CD4-positive, alpha-beta memory T cell (primary cell): ENCODE measurements at regions of chr16 and their contacts with region 1.

Region 1: GRCh38 chr16:57591086-57591869 is 37.2 kb upstream of the ADGRG1 start:
- DNase-seq: peak; percentile 49 to 60 (median 59)
- H3K4me3 ChIP-seq: no peak overlapping the region
- H3K4me3 Mint-ChIP-seq: peak overlapping the region in 6 of 8 donors; percentile 23 to 89 (median 56)
- H3K27ac ChIP-seq: no peak overlapping the region
- H3K27ac Mint-ChIP-seq: peak overlapping the region; percentile 8 to 91 (median 68)
- H3K4me1 ChIP-seq: peaks cover 35% of the 10 kb centered on the region
- H3K4me1 Mint-ChIP-seq: peaks cover 28 to 49% (median 35%) of the 10 kb centered on the region in 4 donors
- H3K27me3 ChIP-seq: no peaks in the 10 kb centered on the region
- H3K27me3 Mint-ChIP-seq: no peaks in the 10 kb centered on the region

Region 2: DNA sequence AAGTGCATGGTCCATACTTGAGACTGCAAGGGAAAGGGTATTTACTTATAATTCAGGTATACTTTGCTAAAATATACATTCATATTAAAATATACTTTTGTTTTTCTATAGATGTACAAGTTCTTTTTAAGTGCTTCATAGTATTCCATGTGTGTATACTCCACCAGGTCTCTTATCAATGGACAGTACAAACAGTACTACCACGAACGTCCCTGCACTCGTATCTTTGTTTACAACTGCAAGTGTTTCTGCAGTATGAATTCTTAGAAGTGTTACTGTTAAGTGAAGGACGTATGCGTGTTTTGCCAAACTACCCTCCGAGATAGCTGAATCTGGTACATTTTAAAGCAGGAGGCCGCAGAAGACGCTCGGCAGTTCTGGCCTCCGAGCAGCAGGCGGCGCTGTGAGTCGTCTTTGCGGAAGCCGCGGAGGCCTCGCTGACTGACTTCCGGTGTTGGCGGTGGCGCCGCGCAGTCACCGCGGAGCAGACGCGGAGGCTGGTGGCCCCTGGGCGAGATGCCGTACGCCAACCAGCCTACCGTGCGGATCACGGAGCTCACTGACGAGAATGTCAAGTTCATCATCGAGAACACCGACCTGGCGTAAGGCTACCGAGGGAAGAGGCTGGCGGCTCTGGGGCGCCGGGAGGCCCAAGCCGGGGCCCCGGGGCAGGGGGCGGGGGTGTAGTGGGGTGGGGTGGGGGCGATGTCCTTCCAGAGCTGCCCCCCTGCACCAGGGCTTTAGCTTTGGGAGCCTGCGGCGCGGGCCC is 128.9 kb before region 1 on chr16 and contains the start of gene POLR2C:
- CTCF ChIA-PET with region 1: no interaction called
- POLR2A ChIA-PET with region 1: no interaction called
- intact Hi-C with region 1: no loop called
- DNase-seq: peak; percentile 89 to 93 (median 90)
- H3K4me3 ChIP-seq: peak within 1 kb of the TSS; percentile 81 to 87
- H3K4me3 Mint-ChIP-seq: peak within 1 kb of the TSS; percentile 98 to 100 (median 100)
- H3K27ac ChIP-seq: peak within 1 kb of the TSS; percentile 69
- H3K27ac Mint-ChIP-seq: peak within 1 kb of the TSS; percentile 96 to 100 (median 99)
- H3K4me1 ChIP-seq: peaks cover 36% of the 10 kb centered on the region
- H3K4me1 Mint-ChIP-seq: peaks cover 16 to 43% (median 34%) of the 10 kb centered on the region in 4 donors
- H3K27me3 ChIP-seq: no peaks in the 10 kb centered on the region
- H3K27me3 Mint-ChIP-seq: no peaks in the 10 kb centered on the region
- total RNA-seq, gene POLR2C: 71.4 to 78.1 TPM

Region 3: GRCh38 chr16:57513371-57514102 is 77.7 kb before region 1 on chr16:
- CTCF ChIA-PET with region 1: no interaction called
- POLR2A ChIA-PET with region 1: no interaction called
- intact Hi-C with region 1: no loop called
- DNase-seq: no peak
- H3K4me3 ChIP-seq: no peak overlapping the region
- H3K4me3 Mint-ChIP-seq: no peak overlapping the region
- H3K27ac ChIP-seq: no peak overlapping the region
- H3K27ac Mint-ChIP-seq: peak overlapping the region in 1 of 7 donors; percentile 57
- H3K4me1 ChIP-seq: no peaks in the 10 kb centered on the region
- H3K4me1 Mint-ChIP-seq: no peaks in the 10 kb centered on the region
- H3K27me3 ChIP-seq: no peaks in the 10 kb centered on the region
- H3K27me3 Mint-ChIP-seq: no peaks in the 10 kb centered on the region

Region 4: GRCh38 chr16:57530104-57530521 is 61.2 kb before region 1 on chr16:
- CTCF ChIA-PET with region 1: no interaction called
- POLR2A ChIA-PET with region 1: no interaction called
- intact Hi-C with region 1: no loop called
- DNase-seq: peak; percentile 59 to 90 (median 63)
- H3K4me3 ChIP-seq: peak overlapping the region in 1 of 2 donors; percentile 42
- H3K4me3 Mint-ChIP-seq: peak overlapping the region; percentile 67 to 89 (median 82)
- H3K27ac ChIP-seq: peak overlapping the region; percentile 60
- H3K27ac Mint-ChIP-seq: peak overlapping the region; percentile 92 to 97 (median 96)
- H3K4me1 ChIP-seq: peaks cover 59% of the 10 kb centered on the region
- H3K4me1 Mint-ChIP-seq: peaks cover 49 to 60% (median 54%) of the 10 kb centered on the region in 4 donors
- H3K27me3 ChIP-seq: no peaks in the 10 kb centered on the region
- H3K27me3 Mint-ChIP-seq: no peaks in the 10 kb centered on the region

Region 5: GRCh38 chr16:57609541-57610401 is 18.5 kb after region 1 on chr16:
- CTCF ChIA-PET with region 1: interaction called, 58 read pairs
- POLR2A ChIA-PET with region 1: interaction called, 21 read pairs
- intact Hi-C with region 1: loop called (anchors 2 kb)
- DNase-seq: peak; percentile 60 to 67 (median 60)
- H3K4me3 ChIP-seq: peak overlapping the region; percentile 12 to 30
- H3K4me3 Mint-ChIP-seq: peak overlapping the region; percentile 1 to 87 (median 76)
- H3K27ac ChIP-seq: peak overlapping the region; percentile 23
- H3K27ac Mint-ChIP-seq: peak overlapping the region; percentile 67 to 92 (median 88)
- H3K4me1 ChIP-seq: peaks cover 26% of the 10 kb centered on the region
- H3K4me1 Mint-ChIP-seq: peaks cover 13 to 29% (median 20%) of the 10 kb centered on the region in 4 donors
- H3K27me3 ChIP-seq: no peaks in the 10 kb centered on the region
- H3K27me3 Mint-ChIP-seq: no peaks in the 10 kb centered on the region

Region 6: DNA sequence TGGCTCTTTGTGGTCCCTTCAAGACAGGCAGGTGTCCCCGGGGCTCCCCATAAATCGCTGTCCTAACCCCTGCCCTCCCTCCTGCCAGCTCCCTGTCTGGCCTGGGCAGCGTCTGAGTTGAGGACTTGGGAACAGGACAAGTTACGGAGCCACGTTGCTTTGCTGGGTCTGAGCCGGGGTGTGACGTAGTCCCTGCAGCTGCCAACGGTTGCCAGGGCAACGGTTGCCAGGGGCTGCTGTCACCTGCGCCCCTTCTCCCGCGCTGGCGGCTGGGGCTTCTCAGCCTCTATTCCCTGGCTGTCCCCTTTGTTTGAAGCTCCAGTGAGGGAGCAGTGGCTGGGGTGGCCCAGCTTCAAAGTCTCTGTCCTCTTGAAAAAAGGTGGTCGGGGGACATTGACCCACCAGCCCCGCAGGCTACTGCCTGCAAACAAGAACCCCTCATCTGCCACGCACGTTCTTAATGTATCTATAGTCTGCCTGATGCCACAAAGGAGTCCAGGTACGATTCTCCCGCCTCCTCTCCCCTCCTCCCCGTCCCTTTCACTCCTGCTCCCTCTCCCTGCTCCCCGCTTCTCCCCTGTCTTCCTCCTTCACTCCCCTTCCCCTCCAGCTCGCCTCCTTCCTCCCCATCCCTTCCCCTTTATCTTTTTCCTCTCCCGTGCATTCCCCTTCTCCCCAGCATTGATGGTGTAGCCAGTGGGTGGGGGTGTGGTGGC is 48.1 kb after region 1 on chr16:
- CTCF ChIA-PET with region 1: interaction called, 10 read pairs
- POLR2A ChIA-PET with region 1: no interaction called
- intact Hi-C with region 1: no loop called
- DNase-seq: peak in 3 of 5 donors; percentile 11 to 19 (median 19)
- H3K4me3 ChIP-seq: no peak overlapping the region
- H3K4me3 Mint-ChIP-seq: no peak overlapping the region
- H3K27ac ChIP-seq: no peak overlapping the region
- H3K27ac Mint-ChIP-seq: peak overlapping the region in 2 of 7 donors; percentile 27 to 30
- H3K4me1 ChIP-seq: no peaks in the 10 kb centered on the region
- H3K4me1 Mint-ChIP-seq: peaks cover 0 to 1% (median 0%) of the 10 kb centered on the region in 4 donors
- H3K27me3 ChIP-seq: no peaks in the 10 kb centered on the region
- H3K27me3 Mint-ChIP-seq: peaks cover 3 to 11% of the 10 kb centered on the region in 2 donors

Region 7: GRCh38 chr16:57648590-57649442 is 57.5 kb after region 1 on chr16:
- CTCF ChIA-PET with region 1: interaction called, 357 read pairs
- POLR2A ChIA-PET with region 1: interaction called, 16 read pairs
- intact Hi-C with region 1: loop called (anchors 1 kb)
- DNase-seq: peak; percentile 78 to 85 (median 80)
- H3K4me3 ChIP-seq: no peak overlapping the region
- H3K4me3 Mint-ChIP-seq: peak overlapping the region in 1 of 8 donors; percentile 3
- H3K27ac ChIP-seq: no peak overlapping the region
- H3K27ac Mint-ChIP-seq: peak overlapping the region in 4 of 7 donors; percentile 29 to 79 (median 64)
- H3K4me1 ChIP-seq: peaks cover 26% of the 10 kb centered on the region
- H3K4me1 Mint-ChIP-seq: peaks cover 15 to 32% (median 23%) of the 10 kb centered on the region in 4 donors
- H3K27me3 ChIP-seq: no peaks in the 10 kb centered on the region
- H3K27me3 Mint-ChIP-seq: no peaks in the 10 kb centered on the region

Region 8: GRCh38 chr16:57720142-57720575 is 128.9 kb after region 1 on chr16:
- CTCF ChIA-PET with region 1: no interaction called
- POLR2A ChIA-PET with region 1: no interaction called
- intact Hi-C with region 1: loop called (anchors 1 kb)
- DNase-seq: peak in 3 of 5 donors; percentile 28 to 37 (median 33)
- H3K4me3 ChIP-seq: no peak overlapping the region
- H3K4me3 Mint-ChIP-seq: no peak overlapping the region
- H3K27ac ChIP-seq: no peak overlapping the region
- H3K27ac Mint-ChIP-seq: peak overlapping the region in 1 of 7 donors; percentile 47
- H3K4me1 ChIP-seq: no peaks in the 10 kb centered on the region
- H3K4me1 Mint-ChIP-seq: no peaks in the 10 kb centered on the region
- H3K27me3 ChIP-seq: no peaks in the 10 kb centered on the region
- H3K27me3 Mint-ChIP-seq: peaks cover 6% of the 10 kb centered on the region in 2 donors